Uterus (tissue), 4 donors: ENCODE measurements at regions of chr1 and their contacts with region 1.

Region 1: GRCh38 chr1:223748773-223749733 is 36.7 kb downstream of the CAPN2 start:
- DNase-seq: peak; percentile 61 to 73
- H3K4me3 ChIP-seq: peak overlapping the region; percentile 33 to 40
- H3K27ac ChIP-seq: peak overlapping the region; percentile 83 to 86
- H3K4me1 ChIP-seq: no peaks in the 10 kb centered on the region
- H3K27me3 ChIP-seq: no peaks in the 10 kb centered on the region
- CTCF ChIP-seq: peak; percentile 88 to 100 (median 95)
- POLR2A ChIP-seq: peak in 1 of 2 donors; percentile 36

Region 2: GRCh38 chr1:223695941-223696340 is 53.1 kb before region 1 on chr1:
- intact Hi-C with region 1: loop called (anchors 5 kb)
- DNase-seq: no peak
- H3K4me3 ChIP-seq: no peak overlapping the region
- H3K27ac ChIP-seq: no peak overlapping the region
- H3K4me1 ChIP-seq: peaks cover 0 to 7% of the 10 kb centered on the region in 2 donors
- H3K27me3 ChIP-seq: no peaks in the 10 kb centered on the region
- CTCF ChIP-seq: no peak
- POLR2A ChIP-seq: no peak

Region 3: DNA sequence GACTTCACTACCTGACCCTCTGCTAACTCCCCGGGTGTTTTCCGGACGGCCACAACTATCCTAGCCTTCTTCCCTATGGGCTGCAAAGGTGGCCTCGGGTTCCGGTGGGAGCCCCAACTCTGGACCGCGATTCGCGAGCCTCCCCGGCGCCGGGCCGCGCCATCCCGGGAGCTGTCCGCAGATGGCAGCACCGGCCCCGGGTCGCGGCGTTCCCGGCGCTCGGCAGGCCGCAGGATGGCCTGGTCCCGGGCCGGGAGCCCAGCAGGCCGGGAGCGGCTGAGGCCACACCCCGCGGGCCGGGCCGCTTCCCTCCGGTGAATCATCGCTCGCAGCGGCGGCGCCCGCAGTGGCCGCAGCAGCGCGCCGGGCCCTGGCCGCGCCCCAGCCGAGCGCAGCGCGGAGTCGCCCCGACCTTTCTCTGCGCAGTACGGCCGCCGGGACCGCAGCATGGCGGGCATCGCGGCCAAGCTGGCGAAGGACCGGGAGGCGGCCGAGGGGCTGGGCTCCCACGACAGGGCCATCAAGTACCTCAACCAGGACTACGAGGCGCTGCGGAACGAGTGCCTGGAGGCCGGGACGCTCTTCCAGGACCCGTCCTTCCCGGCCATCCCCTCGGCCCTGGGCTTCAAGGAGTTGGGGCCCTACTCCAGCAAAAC is 36.7 kb before region 1 on chr1 and contains the start of gene CAPN2:
- intact Hi-C with region 1: loop called (anchors 5 kb)
- DNase-seq: peak; percentile 76 to 85
- H3K4me3 ChIP-seq: peak within 1 kb of the TSS; percentile 62 to 76
- H3K27ac ChIP-seq: peak within 1 kb of the TSS; percentile 94 to 96
- H3K4me1 ChIP-seq: no peaks in the 10 kb centered on the region
- H3K27me3 ChIP-seq: no peaks in the 10 kb centered on the region
- CTCF ChIP-seq: peak; percentile 58 to 92 (median 88)
- POLR2A ChIP-seq: peak; percentile 52 to 90
- total RNA-seq, gene CAPN2: 96.5 to 170 (median 117) TPM

Region 4: DNA sequence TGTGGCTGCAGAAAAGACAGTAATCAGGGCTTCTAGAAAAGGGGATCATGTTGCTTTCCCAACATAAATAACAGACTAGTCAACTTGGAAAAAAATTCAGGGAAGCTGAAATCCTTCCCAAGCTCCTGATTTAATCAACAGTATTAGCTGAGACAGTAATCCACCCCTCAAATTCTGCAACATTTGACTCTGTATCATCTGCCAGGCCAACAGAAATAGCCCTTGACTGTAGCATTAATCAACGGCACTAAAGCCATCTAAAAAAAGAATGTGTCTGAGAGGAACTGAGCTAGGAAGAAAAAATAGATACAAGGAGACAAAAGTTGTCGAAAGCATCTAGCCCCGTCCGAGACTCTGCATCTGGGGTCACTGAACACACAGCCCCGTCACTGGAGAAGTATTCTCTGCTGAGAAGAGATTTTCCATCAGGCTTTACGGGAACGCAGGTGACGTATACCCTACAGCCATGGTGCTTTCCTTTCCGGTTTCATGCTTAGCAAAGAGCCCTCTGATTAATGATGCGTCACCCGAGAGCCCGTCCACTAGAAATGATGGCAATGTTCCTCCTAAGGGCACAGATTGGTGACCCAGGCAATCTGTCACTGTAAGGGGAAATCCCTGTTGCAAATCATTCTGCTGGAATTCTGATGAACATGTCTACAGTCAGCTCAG is 138.8 kb after region 1 on chr1:
- intact Hi-C with region 1: no loop called
- DNase-seq: peak; percentile 63 to 67
- H3K4me3 ChIP-seq: no peak overlapping the region
- H3K27ac ChIP-seq: peak overlapping the region; percentile 35 to 66
- H3K4me1 ChIP-seq: no peaks in the 10 kb centered on the region
- H3K27me3 ChIP-seq: no peaks in the 10 kb centered on the region
- CTCF ChIP-seq: no peak
- POLR2A ChIP-seq: no peak